ENCODE measurements at regions of chr17 and their contacts with region 1.

Region 1: GRCh38 chr17:4143563-4144421 is 795 bp downstream of the CYB5D2 start:
- DNase-seq: peak; percentile 81 to 98 (median 91)
- ATAC-seq: peak; percentile 63
- H3K4me3 ChIP-seq: peak overlapping the region; percentile 72 to 88
- H3K4me3 Mint-ChIP-seq: peak overlapping the region; percentile 99
- H3K27ac ChIP-seq: peak overlapping the region; percentile 98
- H3K27ac Mint-ChIP-seq: peak overlapping the region; percentile 100
- H3K4me1 ChIP-seq: peaks cover 42% of the 10 kb centered on the region
- H3K4me1 Mint-ChIP-seq: peaks cover 43% of the 10 kb centered on the region
- H3K27me3 ChIP-seq: no peaks in the 10 kb centered on the region
- H3K27me3 Mint-ChIP-seq: no peaks in the 10 kb centered on the region
- CTCF ChIP-seq: no peak

Region 2: DNA sequence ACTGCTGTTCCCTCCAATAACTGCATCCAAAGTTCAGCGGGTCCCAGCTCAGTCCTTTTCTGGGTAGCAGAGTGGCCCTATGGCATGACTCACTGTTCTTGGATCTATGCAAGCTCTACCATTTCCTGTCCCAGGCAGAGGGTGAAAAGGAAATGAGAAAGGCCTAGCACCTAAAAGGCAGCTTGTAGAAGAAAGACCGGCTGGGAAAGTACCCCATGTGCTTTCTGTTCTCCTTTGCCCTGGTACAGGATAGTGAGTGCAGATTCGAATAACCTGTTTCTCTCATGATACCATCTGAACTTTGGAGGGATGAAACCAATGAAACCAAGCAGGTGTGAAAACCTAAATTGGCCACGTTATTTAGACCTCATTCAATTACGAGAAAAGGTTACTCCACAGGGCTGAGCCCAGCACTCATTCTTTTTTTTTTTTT is 432.8 kb before region 1 on chr17:
- CTCF ChIA-PET with region 1: no interaction called
- POLR2A ChIA-PET with region 1: no interaction called
- intact Hi-C with region 1: loop called in 1 of 2 experiments (anchors 10 kb)
- DNase-seq: peak; percentile 30 to 96 (median 67)
- ATAC-seq: peak; percentile 97
- H3K4me3 ChIP-seq: no peak overlapping the region
- H3K4me3 Mint-ChIP-seq: peak overlapping the region; percentile 37
- H3K27ac ChIP-seq: peak overlapping the region in 1 of 2 experiments; percentile 62
- H3K27ac Mint-ChIP-seq: peak overlapping the region; percentile 86
- H3K4me1 ChIP-seq: peaks cover 31% of the 10 kb centered on the region
- H3K4me1 Mint-ChIP-seq: peaks cover 38% of the 10 kb centered on the region
- H3K27me3 ChIP-seq: no peaks in the 10 kb centered on the region
- H3K27me3 Mint-ChIP-seq: no peaks in the 10 kb centered on the region
- CTCF ChIP-seq: no peak

Region 3: DNA sequence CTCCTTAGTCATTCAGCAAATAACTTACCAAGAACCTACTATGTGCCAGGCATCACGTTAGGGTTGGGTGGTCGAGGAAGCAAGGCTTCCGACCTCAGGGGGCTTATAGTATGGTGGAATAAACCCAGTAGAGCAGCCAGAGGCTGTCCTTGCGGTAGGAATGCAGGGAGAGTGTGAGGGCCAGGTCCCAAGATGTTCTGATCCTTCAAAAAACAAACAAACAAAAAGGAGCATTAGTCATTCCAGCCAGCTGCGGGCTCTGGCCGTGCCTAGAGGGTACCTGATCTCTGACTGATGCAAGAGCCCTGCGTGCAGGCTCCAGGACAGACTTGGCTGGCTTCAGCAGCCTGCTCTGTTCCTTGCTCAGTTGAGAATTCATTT is 17.4 kb after region 1 on chr17:
- CTCF ChIA-PET with region 1: no interaction called
- POLR2A ChIA-PET with region 1: interaction called, 54 read pairs
- intact Hi-C with region 1: no loop called
- DNase-seq: no peak
- ATAC-seq: no peak
- H3K4me3 ChIP-seq: no peak overlapping the region
- H3K4me3 Mint-ChIP-seq: no peak overlapping the region
- H3K27ac ChIP-seq: no peak overlapping the region
- H3K27ac Mint-ChIP-seq: peak overlapping the region; percentile 27
- H3K4me1 ChIP-seq: no peaks in the 10 kb centered on the region
- H3K4me1 Mint-ChIP-seq: no peaks in the 10 kb centered on the region
- H3K27me3 ChIP-seq: no peaks in the 10 kb centered on the region
- H3K27me3 Mint-ChIP-seq: no peaks in the 10 kb centered on the region
- CTCF ChIP-seq: no peak

Region 4: DNA sequence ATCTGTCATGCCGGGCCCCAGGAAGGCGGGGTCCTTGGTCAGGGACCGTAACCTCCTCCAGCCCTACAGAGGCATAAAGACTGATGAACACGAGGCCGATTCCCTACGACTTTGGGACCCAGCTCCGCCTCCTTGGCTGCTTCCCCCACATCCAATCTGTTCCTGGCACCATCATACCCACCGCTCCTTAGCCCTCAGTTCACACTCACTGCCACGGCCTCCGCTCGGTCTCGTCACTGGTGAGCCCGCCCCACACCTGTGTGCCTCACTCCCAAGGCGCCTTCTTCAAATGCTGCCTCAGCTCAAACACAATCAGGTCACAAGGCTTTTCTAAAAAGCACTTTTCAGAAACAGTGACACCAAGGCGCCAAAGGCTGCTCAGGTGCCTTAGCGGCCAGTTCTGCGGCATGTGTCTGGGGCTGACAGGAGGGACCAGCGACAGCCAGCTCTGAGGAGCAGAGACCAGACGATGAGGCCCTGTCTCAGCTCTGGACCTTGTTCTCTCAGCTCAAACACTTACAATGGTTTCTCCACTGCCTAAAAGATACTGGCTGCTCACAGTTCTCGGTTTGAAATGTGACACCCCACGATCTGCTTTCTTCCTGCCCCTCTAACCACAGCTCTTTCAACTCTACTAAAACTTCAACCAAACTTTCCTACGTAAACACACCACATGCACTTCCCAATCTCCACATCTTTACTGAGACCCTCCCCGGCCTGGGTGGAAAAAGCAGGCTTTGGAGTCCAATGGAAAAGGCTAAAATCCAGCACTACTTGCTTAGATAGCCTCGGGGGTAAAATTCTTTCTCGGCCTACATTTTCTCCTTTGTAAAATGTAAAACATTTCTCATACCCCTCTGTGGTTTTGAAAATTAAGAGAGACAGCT is 32.4 kb after region 1 on chr17:
- CTCF ChIA-PET with region 1: interaction called, 4 read pairs
- POLR2A ChIA-PET with region 1: interaction called, 92 read pairs
- intact Hi-C with region 1: loop called (anchors 1 kb)
- DNase-seq: peak in 8 of 9 experiments; percentile 20 to 79 (median 53)
- ATAC-seq: peak; percentile 77
- H3K4me3 ChIP-seq: peak overlapping the region; percentile 23 to 36
- H3K4me3 Mint-ChIP-seq: peak overlapping the region; percentile 79
- H3K27ac ChIP-seq: peak overlapping the region; percentile 62 to 90
- H3K27ac Mint-ChIP-seq: peak overlapping the region; percentile 97
- H3K4me1 ChIP-seq: peaks cover 49% of the 10 kb centered on the region
- H3K4me1 Mint-ChIP-seq: peaks cover 51% of the 10 kb centered on the region
- H3K27me3 ChIP-seq: no peaks in the 10 kb centered on the region
- H3K27me3 Mint-ChIP-seq: no peaks in the 10 kb centered on the region
- CTCF ChIP-seq: no peak

Region 5: GRCh38 chr17:4366327-4367063 is 222.7 kb after region 1 on chr17 and contains the start of gene UBE2G1:
- CTCF ChIA-PET with region 1: no interaction called
- POLR2A ChIA-PET with region 1: interaction called, 8 read pairs
- intact Hi-C with region 1: loop called (anchors 1 kb)
- DNase-seq: peak; percentile 97 to 100 (median 99)
- ATAC-seq: peak; percentile 86
- H3K4me3 ChIP-seq: peak within 1 kb of the TSS; percentile 53 to 64
- H3K4me3 Mint-ChIP-seq: peak within 1 kb of the TSS; percentile 82
- H3K27ac ChIP-seq: peak within 1 kb of the TSS; percentile 63 to 70
- H3K27ac Mint-ChIP-seq: peak within 1 kb of the TSS; percentile 92
- H3K4me1 ChIP-seq: peaks cover 28% of the 10 kb centered on the region
- H3K4me1 Mint-ChIP-seq: peaks cover 24% of the 10 kb centered on the region
- H3K27me3 ChIP-seq: no peaks in the 10 kb centered on the region
- H3K27me3 Mint-ChIP-seq: no peaks in the 10 kb centered on the region
- CTCF ChIP-seq: no peak
- total RNA-seq, gene UBE2G1: 65.8 to 68.0 TPM

Region 6: DNA sequence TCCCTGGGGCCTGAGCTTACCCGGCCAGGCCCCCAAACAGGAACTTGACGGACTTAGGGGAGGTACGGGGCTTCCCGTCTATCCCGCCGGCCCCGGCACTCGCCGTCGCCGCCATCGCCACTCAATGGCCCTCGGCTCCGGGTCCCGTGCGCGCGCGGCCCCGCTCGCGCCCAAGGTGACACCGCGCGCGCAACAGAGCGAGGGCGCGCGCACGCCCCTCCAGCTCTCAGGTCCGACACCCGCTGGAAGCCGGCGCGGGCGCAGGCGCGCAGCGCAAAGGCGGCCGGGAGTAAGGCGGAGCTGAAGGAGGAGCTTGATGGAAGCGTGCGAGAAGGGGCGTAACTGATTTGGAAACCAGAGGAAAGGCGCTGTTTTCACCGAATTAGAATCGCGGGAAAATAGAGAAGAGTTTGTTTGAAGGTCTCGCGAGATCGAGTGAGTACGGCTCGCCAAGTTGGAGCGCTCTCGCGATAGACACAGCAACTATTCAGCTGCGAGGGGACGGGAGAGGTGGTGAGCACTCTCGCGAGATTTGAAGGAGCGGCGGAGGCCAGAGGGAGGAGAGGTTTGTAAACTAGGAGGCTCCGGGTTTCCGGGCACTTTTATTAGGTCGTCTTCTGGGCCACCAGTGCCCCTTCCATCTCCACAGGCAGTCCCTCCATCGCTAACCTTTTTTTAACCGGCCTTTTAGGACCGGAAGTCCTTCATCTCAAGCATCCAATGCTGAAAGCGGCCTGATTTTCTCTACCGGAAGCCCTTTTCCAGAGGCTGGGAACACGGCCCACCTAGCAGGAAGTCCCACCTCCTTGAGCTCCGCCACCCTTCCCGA is 796.2 kb after region 1 on chr17 and contains the starts of genes RNF167 and SLC25A11:
- CTCF ChIA-PET with region 1: no interaction called
- POLR2A ChIA-PET with region 1: interaction called, 6 read pairs
- intact Hi-C with region 1: loop called in 1 of 2 experiments (anchors 5 kb)
- DNase-seq: peak; percentile 90 to 100 (median 95)
- ATAC-seq: peak; percentile 87
- H3K4me3 ChIP-seq: peak within 1 kb of the TSS; percentile 95 to 96
- H3K4me3 Mint-ChIP-seq: peak within 1 kb of the TSS; percentile 92
- H3K27ac ChIP-seq: peak within 1 kb of the TSS; percentile 83 to 92
- H3K27ac Mint-ChIP-seq: peak within 1 kb of the TSS; percentile 95
- H3K4me1 ChIP-seq: peaks cover 54% of the 10 kb centered on the region
- H3K4me1 Mint-ChIP-seq: peaks cover 60% of the 10 kb centered on the region
- H3K27me3 ChIP-seq: no peaks in the 10 kb centered on the region
- H3K27me3 Mint-ChIP-seq: no peaks in the 10 kb centered on the region
- CTCF ChIP-seq: no peak
- total RNA-seq, gene RNF167: 49.3 to 52.2 TPM
- total RNA-seq, gene SLC25A11: 15.8 to 16.3 TPM

Region 7: GRCh38 chr17:5486204-5487124 is 1342.7 kb after region 1 on chr17 and contains the start of gene MIS12:
- CTCF ChIA-PET with region 1: no interaction called
- POLR2A ChIA-PET with region 1: no interaction called
- intact Hi-C with region 1: loop called in 1 of 2 experiments (anchors 5 kb)
- DNase-seq: peak; percentile 93 to 100 (median 97)
- ATAC-seq: peak; percentile 89
- H3K4me3 ChIP-seq: peak within 1 kb of the TSS; percentile 94
- H3K4me3 Mint-ChIP-seq: peak within 1 kb of the TSS; percentile 94
- H3K27ac ChIP-seq: peak within 1 kb of the TSS; percentile 98 to 99
- H3K27ac Mint-ChIP-seq: peak within 1 kb of the TSS; percentile 95
- H3K4me1 ChIP-seq: peaks cover 28% of the 10 kb centered on the region
- H3K4me1 Mint-ChIP-seq: peaks cover 60% of the 10 kb centered on the region
- H3K27me3 ChIP-seq: no peaks in the 10 kb centered on the region
- H3K27me3 Mint-ChIP-seq: no peaks in the 10 kb centered on the region
- CTCF ChIP-seq: no peak
- total RNA-seq, gene MIS12: 21.9 to 24.4 TPM